ENCODE measurements at regions of chr9 and their contacts with region 1.

Region 1: DNA sequence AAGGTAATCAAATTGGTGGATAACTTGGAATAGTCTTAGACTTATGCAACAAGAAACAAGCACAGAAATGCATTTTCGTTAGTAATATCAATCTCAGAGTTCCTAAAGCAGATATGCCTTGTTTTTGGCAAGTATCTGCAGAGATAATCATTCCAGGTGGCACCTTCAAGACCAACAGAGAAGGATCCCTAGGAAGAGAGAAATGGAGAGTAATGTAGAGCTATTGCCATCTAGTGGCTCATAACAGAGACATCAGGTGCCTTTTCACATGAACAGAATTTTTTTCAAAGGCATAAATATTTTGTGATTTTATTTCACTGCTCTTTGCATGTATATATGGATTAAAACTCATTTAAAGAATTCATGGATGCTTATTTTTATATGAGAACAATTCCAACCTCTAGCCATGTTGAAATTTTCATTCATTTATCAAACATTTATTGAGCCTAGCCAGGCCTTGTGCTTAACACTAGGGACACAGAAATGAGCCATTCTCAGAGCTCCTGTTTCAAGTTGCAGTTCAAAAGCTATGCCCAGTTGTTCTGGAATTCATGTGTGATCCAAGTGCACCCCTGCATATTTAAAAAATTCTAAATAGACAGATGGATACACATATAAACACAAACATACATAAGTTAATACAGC is 117.5 kb upstream of the OR13F1 start:
- DNase-seq: no peak
- ATAC-seq: peak; percentile 92 to 99 (median 94)
- H3K4me3 ChIP-seq: no peak overlapping the region
- H3K27ac ChIP-seq: no peak overlapping the region
- H3K4me1 ChIP-seq: peaks cover 0 to 9% (median 3%) of the 10 kb centered on the region in 3 donors
- H3K27me3 ChIP-seq: no peaks in the 10 kb centered on the region
- CTCF ChIP-seq: peak; percentile 34 to 65 (median 55)

Region 2: GRCh38 chr9:104177003-104177611 is 209.4 kb before region 1 on chr9:
- intact Hi-C with region 1: loop called in 2 of 3 experiments (anchors 5 to 10 kb)
- DNase-seq: peak in 2 of 6 donors; percentile 12 to 16
- ATAC-seq: peak; percentile 70 to 88 (median 80)
- H3K4me3 ChIP-seq: no peak overlapping the region
- H3K27ac ChIP-seq: no peak overlapping the region
- H3K4me1 ChIP-seq: no peaks in the 10 kb centered on the region
- H3K27me3 ChIP-seq: no peaks in the 10 kb centered on the region
- CTCF ChIP-seq: peak; percentile 22 to 60 (median 48)

Region 3: DNA sequence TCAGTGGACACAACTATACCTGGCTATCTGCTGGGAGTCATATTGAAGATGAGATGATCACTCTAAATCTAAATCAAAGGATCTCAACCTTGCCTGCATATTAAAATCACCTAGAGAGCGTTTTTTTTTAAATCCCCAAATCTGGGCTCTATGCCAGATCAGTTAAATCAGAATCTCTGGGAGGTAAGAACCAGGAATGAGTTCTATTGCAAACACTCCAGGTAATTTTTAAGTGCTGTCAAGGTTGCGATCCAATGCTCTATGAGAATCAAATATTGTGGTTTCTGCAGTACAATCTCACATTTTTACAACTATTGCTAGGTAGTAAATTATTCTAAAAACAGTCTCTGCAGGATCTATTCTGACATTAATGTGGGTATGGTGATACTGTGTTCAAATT is 84.8 kb before region 1 on chr9:
- intact Hi-C with region 1: no loop called
- DNase-seq: no peak
- ATAC-seq: peak in 3 of 4 donors; percentile 14 to 67 (median 28)
- H3K4me3 ChIP-seq: no peak overlapping the region
- H3K27ac ChIP-seq: no peak overlapping the region
- H3K4me1 ChIP-seq: peaks cover 0 to 3% (median 0%) of the 10 kb centered on the region in 3 donors
- H3K27me3 ChIP-seq: no peaks in the 10 kb centered on the region
- CTCF ChIP-seq: no peak

Region 4: DNA sequence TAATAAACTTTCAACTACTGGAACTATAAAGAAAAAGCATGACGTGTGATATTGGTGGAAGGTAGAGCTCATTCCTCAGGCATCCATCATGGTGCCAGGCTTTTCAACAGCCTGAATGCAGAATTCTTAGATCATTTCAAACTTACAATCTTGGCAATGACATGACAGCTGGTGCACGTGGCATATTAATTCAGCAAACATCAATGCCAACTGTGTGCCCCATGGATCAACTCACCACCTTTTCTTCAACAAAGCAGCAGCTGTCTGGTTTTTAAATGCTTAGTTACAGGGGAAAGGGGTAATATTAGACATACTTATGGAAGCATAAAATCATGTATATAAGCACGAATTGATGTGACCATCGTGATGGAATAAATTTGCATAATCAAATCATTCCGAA is 61.5 kb after region 1 on chr9:
- intact Hi-C with region 1: no loop called
- DNase-seq: no peak
- ATAC-seq: no peak
- H3K4me3 ChIP-seq: no peak overlapping the region
- H3K27ac ChIP-seq: no peak overlapping the region
- H3K4me1 ChIP-seq: no peaks in the 10 kb centered on the region
- H3K27me3 ChIP-seq: no peaks in the 10 kb centered on the region
- CTCF ChIP-seq: no peak

Measured in pancreas (tissue), 10 donors.